Endothelial cell of umbilical vein (primary cell): ENCODE measurements at regions of chr13 and their contacts with region 1.

Region 1: DNA sequence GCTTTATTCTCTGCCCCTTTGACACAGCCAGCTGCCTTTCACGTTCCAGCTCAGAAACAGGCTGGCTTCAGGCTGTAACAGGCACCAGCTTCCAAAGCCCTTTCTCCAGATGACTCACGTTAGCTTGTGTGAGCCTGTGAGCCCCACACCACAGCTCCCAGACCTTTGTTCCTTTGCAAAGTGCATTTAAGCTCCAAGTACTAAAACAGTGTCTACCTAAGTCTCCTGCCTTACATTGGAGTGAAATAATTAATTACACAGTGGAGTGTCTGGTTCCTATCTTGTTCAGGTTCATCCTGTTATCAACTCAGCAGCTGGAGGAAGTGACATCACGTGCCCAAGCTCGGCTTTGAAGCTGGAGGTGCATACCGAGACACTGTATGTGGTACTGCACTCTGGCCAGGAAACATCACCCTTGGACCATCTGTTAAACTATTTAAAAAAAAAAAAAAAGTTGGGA is 475.8 kb downstream of the FOXO1 start:
- DNase-seq: peak; percentile 89
- H3K4me3 ChIP-seq: no peak overlapping the region
- H3K27ac ChIP-seq: peak overlapping the region; percentile 85
- H3K4me1 ChIP-seq: peaks cover 53% of the 10 kb centered on the region
- H3K27me3 ChIP-seq: no peaks in the 10 kb centered on the region
- CTCF ChIP-seq: no peak
- POLR2A ChIP-seq: no peak

Region 2: GRCh38 chr13:39840201-39840600 is 350.5 kb before region 1 on chr13:
- CTCF ChIA-PET with region 1: no interaction called
- POLR2A ChIA-PET with region 1: no interaction called
- dilution Hi-C with region 1: no loop called
- intact Hi-C with region 1: no loop called
- DNase-seq: no peak
- H3K4me3 ChIP-seq: no peak overlapping the region
- H3K27ac ChIP-seq: no peak overlapping the region
- H3K4me1 ChIP-seq: no peaks in the 10 kb centered on the region
- H3K27me3 ChIP-seq: no peaks in the 10 kb centered on the region
- CTCF ChIP-seq: no peak
- POLR2A ChIP-seq: no peak

Region 3: GRCh38 chr13:39952249-39953233 is 238.1 kb before region 1 on chr13:
- CTCF ChIA-PET with region 1: no interaction called
- POLR2A ChIA-PET with region 1: interaction called, 3 read pairs
- dilution Hi-C with region 1: no loop called
- intact Hi-C with region 1: loop called (anchors 1 kb)
- DNase-seq: peak; percentile 97
- H3K4me3 ChIP-seq: no peak overlapping the region
- H3K27ac ChIP-seq: peak overlapping the region; percentile 88
- H3K4me1 ChIP-seq: peaks cover 24% of the 10 kb centered on the region
- H3K27me3 ChIP-seq: no peaks in the 10 kb centered on the region
- CTCF ChIP-seq: no peak
- POLR2A ChIP-seq: no peak

Region 4: GRCh38 chr13:40094056-40094455 is 96.6 kb before region 1 on chr13:
- CTCF ChIA-PET with region 1: no interaction called
- POLR2A ChIA-PET with region 1: no interaction called
- dilution Hi-C with region 1: no loop called
- intact Hi-C with region 1: no loop called
- DNase-seq: no peak
- H3K4me3 ChIP-seq: no peak overlapping the region
- H3K27ac ChIP-seq: no peak overlapping the region
- H3K4me1 ChIP-seq: no peaks in the 10 kb centered on the region
- H3K27me3 ChIP-seq: no peaks in the 10 kb centered on the region
- CTCF ChIP-seq: no peak
- POLR2A ChIP-seq: no peak

Region 5: GRCh38 chr13:40130871-40131636 is 59.6 kb before region 1 on chr13:
- CTCF ChIA-PET with region 1: interaction called, 4 read pairs
- POLR2A ChIA-PET with region 1: no interaction called
- dilution Hi-C with region 1: no loop called
- intact Hi-C with region 1: loop called (anchors 1 kb)
- DNase-seq: peak; percentile 93
- H3K4me3 ChIP-seq: no peak overlapping the region
- H3K27ac ChIP-seq: peak overlapping the region; percentile 60
- H3K4me1 ChIP-seq: peaks cover 13% of the 10 kb centered on the region
- H3K27me3 ChIP-seq: no peaks in the 10 kb centered on the region
- CTCF ChIP-seq: no peak
- POLR2A ChIP-seq: no peak

Region 6: DNA sequence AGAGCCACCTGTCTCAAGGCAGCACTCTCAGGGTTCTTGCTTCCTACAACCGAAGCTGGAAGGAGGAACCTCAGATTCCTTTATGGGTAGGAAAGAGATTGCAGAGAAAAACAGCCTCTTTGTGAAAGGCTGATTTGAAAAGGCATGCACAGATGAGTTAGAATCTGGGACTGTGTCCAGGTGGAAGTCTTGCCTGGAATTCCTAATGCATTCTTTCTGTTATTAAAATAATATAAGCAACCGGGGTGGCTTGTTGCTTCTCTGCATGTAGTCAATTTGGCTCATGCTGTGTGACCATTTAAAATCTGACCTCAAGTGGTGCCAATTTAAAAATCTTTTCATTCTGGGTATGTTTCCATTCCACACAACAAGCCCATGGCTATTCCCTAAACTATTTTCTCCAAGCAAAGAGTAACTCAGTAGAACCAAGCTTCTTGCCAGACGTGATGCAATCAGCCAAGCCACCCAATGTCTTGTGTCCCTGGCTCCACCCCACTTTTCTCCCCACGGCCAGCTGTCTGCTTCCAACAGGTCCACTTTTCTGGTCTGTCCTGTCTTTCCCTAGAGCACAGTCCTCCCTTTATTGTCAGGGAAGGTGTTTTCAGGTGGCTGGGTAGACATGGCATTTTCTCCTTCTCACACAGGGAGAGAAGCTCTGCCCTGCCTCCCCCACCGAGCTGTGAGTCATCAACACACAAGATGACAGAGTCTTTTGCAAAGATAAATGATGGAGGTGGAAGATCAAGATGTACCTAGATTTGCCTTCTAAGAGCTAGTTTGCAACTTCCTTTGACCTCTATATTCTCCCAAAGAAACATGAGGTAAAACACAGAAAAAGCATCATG is 81.5 kb after region 1 on chr13:
- CTCF ChIA-PET with region 1: interaction called, 3 read pairs
- POLR2A ChIA-PET with region 1: no interaction called
- dilution Hi-C with region 1: no loop called
- intact Hi-C with region 1: loop called (anchors 1 kb)
- DNase-seq: peak; percentile 55
- H3K4me3 ChIP-seq: no peak overlapping the region
- H3K27ac ChIP-seq: peak overlapping the region; percentile 40
- H3K4me1 ChIP-seq: peaks cover 9% of the 10 kb centered on the region
- H3K27me3 ChIP-seq: no peaks in the 10 kb centered on the region
- CTCF ChIP-seq: no peak
- POLR2A ChIP-seq: no peak

Region 7: DNA sequence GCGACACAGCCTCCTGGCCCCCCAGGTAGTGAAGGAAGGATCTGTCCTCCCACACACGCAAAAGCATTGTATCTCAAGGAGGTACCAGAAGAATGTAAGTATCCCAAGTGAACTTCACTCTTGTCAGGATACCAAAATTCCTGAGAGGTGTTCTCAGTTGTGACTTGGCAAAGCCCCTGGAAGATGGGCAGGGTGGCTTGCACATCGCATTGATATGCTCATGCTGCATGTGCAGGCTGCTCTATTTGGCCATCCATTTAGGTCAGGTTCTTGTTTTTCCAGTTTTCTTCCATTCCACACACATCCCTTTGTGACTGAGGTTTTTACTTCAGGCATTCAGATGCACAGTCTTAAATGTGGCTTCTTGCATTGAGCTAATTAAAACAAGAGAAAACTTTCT is 93.0 kb after region 1 on chr13:
- CTCF ChIA-PET with region 1: no interaction called
- POLR2A ChIA-PET with region 1: no interaction called
- dilution Hi-C with region 1: no loop called
- intact Hi-C with region 1: no loop called
- DNase-seq: no peak
- H3K4me3 ChIP-seq: no peak overlapping the region
- H3K27ac ChIP-seq: no peak overlapping the region
- H3K4me1 ChIP-seq: no peaks in the 10 kb centered on the region
- H3K27me3 ChIP-seq: no peaks in the 10 kb centered on the region
- CTCF ChIP-seq: no peak
- POLR2A ChIP-seq: no peak

Region 8: DNA sequence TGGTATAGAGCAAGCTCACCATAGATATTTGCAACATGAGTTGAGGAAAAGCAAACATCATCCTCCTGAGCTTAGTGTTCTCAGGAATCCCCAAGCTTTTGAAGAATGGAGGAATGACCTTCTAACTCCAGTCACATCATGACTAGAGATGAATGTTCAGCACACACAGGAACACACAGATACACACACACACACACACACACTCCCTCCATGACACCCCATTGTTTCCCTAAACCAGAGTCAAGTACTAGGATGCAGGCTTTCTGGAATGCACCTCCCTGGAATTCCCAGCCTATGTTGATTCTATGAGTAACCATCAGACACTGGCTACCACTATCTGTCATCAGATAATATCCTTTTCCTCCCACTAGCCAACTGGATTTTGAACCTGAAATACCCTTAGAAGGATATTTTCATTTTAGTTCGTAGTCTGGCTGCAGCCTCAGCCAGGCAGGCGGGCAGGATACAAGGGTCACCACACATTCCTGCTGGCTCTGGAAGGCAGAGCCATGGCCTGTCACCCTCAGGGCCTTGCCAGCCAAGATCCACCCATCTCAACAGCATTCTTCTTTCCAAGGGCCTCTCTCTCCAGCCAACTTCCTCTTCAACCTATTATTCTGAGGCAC is 313.4 kb after region 1 on chr13:
- CTCF ChIA-PET with region 1: interaction called, 4 read pairs
- POLR2A ChIA-PET with region 1: no interaction called
- dilution Hi-C with region 1: no loop called
- intact Hi-C with region 1: loop called (anchors 1 kb)
- DNase-seq: peak; percentile 99
- H3K4me3 ChIP-seq: no peak overlapping the region
- H3K27ac ChIP-seq: peak overlapping the region; percentile 99
- H3K4me1 ChIP-seq: peaks cover 51% of the 10 kb centered on the region
- H3K27me3 ChIP-seq: no peaks in the 10 kb centered on the region
- CTCF ChIP-seq: no peak
- POLR2A ChIP-seq: peak; percentile 74

Region 9: GRCh38 chr13:40666045-40666904 is 475.6 kb after region 1 on chr13 and contains the start of gene FOXO1:
- CTCF ChIA-PET with region 1: no interaction called
- POLR2A ChIA-PET with region 1: no interaction called
- dilution Hi-C with region 1: no loop called
- intact Hi-C with region 1: loop called (anchors 1 kb)
- DNase-seq: peak; percentile 79
- H3K4me3 ChIP-seq: peak within 1 kb of the TSS; percentile 67 to 95 (median 86)
- H3K27ac ChIP-seq: peak within 1 kb of the TSS; percentile 81
- H3K4me1 ChIP-seq: peaks cover 24% of the 10 kb centered on the region
- H3K27me3 ChIP-seq: no peaks in the 10 kb centered on the region
- CTCF ChIP-seq: no peak
- POLR2A ChIP-seq: peak; percentile 97
- total RNA-seq, gene FOXO1: 47.6 and 48.5 TPM in 2 replicates